HepG2 (cell line): ENCODE measurements at regions of chr3 and their contacts with region 1.

Region 1: DNA sequence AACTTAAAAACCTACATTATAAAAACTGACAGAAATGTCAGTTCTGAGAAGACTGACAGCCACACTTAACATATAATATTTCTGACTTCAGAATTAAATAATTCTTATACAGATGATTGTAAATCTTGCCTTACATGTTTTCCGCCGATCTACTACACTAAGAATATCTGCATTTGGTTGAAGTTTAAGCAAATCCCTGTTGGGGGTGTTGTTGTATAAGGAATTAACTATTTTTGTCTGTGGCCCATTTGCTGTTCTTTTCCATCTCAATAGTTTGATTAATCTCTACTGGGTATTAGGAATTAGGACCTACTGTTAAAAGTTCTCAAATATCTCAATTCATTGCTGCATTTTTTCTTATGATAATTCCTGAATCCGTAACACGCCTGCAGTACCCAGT is 838.3 kb upstream of the ROBO1 start:
- DNase-seq: no peak
- ATAC-seq: no peak
- H3K4me3 ChIP-seq: no peak overlapping the region
- H3K27ac ChIP-seq: no peak overlapping the region
- H3K4me1 ChIP-seq: no peaks in the 10 kb centered on the region
- H3K27me3 ChIP-seq: no peaks in the 10 kb centered on the region
- CTCF ChIP-seq: peak; percentile 49
- EP300 ChIP-seq: no peak
- POLR2A ChIP-seq: no peak
- RAD21 ChIP-seq: no peak

Region 2: DNA sequence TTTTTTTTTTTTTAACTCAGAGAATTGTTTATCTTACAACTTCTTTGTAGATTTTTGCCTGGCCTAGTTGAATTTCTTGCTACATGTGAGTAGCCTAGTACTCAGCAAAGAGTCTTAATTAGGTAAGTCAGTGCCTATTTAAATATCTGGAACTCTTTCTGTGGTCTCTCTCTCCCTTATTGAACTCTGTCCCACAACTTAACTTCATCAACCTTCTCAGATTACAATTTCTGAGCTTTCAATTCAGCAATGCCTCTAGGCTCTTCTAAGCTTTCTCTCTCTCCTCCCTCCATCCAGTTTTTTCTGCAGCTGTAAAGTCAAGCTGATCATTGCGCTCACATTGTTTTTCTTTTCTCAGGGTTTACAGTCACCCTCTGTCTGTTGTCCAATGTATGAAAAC is 320.7 kb before region 1 on chr3:
- CTCF ChIA-PET with region 1: no interaction called
- POLR2A ChIA-PET with region 1: no interaction called
- in situ Hi-C with region 1: no loop called
- intact Hi-C with region 1: no loop called
- DNase-seq: no peak
- ATAC-seq: no peak
- H3K4me3 ChIP-seq: no peak overlapping the region
- H3K27ac ChIP-seq: no peak overlapping the region
- H3K4me1 ChIP-seq: no peaks in the 10 kb centered on the region
- H3K27me3 ChIP-seq: no peaks in the 10 kb centered on the region
- CTCF ChIP-seq: no peak
- EP300 ChIP-seq: no peak
- POLR2A ChIP-seq: no peak
- RAD21 ChIP-seq: no peak

Region 3: GRCh38 chr3:80472451-80472850 is 133.6 kb before region 1 on chr3:
- CTCF ChIA-PET with region 1: no interaction called
- POLR2A ChIA-PET with region 1: no interaction called
- in situ Hi-C with region 1: no loop called
- intact Hi-C with region 1: no loop called
- DNase-seq: no peak
- ATAC-seq: no peak
- H3K4me3 ChIP-seq: no peak overlapping the region
- H3K27ac ChIP-seq: no peak overlapping the region
- H3K4me1 ChIP-seq: no peaks in the 10 kb centered on the region
- H3K27me3 ChIP-seq: no peaks in the 10 kb centered on the region
- CTCF ChIP-seq: no peak
- EP300 ChIP-seq: no peak
- POLR2A ChIP-seq: no peak
- RAD21 ChIP-seq: no peak

Region 4: DNA sequence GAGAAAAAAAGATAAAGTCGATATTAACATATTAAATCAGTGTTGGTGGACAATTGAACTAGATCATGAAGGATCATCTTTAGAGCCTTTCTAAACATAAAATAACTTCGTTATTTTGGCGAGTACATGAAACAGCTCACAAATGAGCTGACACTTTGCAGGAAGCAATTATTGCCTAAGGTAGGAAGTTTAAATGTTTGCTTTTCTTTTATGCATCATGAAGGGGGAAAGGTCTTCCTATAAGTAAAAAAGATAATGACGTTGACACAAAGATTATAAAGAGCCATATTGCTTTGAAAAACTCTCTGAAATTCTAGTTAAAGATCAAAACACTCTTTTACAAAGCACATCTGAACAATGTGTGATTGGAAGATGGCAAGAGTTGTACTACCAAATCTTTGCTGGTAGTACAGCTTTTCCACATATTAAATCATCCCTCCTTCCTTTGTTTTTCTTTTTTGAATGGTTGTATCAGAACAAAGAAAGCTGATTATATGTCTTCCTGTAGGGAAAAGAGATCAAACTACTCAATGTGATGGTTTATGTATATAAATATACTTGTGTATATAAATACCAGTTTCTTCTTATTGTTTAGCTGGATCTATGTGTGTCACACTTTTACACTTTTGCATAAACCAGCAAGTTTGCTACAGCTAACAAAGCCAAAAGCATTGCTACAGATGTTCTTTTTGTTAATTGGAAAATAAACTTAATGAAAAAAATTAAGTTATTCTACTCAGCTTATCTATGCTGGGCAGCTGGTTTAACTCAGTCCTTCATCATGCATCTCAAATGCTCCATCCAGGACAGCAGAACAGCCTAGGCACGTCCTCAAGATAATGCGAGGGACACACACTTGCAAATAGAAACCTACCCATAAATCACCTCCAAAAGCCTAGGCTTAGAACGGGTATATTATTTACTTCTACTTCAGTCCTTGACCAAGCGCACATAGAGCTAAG is 12.5 kb after region 1 on chr3:
- CTCF ChIA-PET with region 1: no interaction called
- POLR2A ChIA-PET with region 1: no interaction called
- in situ Hi-C with region 1: no loop called
- intact Hi-C with region 1: no loop called
- DNase-seq: peak; percentile 84
- ATAC-seq: peak; percentile 88
- H3K4me3 ChIP-seq: no peak overlapping the region
- H3K27ac ChIP-seq: peak overlapping the region; percentile 48
- H3K4me1 ChIP-seq: peaks cover 23% of the 10 kb centered on the region
- H3K27me3 ChIP-seq: no peaks in the 10 kb centered on the region
- CTCF ChIP-seq: no peak
- EP300 ChIP-seq: peak in 1 of 2 experiments; percentile 95; a peak in 2 of 4 replicates
- POLR2A ChIP-seq: no peak
- RAD21 ChIP-seq: no peak

Region 5: DNA sequence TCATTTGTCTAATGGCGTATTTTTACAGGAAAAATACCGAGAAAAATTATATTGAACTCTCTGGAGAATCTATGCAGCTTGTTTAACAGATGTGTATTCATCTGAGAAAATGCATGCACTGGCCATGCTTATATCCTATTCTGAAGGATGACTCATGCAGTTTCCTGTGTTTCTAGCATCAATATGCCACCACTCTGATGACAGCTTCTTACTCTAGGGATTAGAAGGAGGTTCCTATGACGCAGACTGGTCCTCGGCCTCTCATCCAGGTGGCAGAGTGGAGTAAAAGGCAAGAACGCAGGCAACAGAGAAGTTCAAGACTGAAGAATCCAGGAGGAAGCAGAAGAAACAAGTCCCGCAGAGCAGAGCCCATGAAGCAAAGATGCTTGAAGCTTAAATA is 71.7 kb after region 1 on chr3:
- CTCF ChIA-PET with region 1: no interaction called
- POLR2A ChIA-PET with region 1: no interaction called
- in situ Hi-C with region 1: no loop called
- intact Hi-C with region 1: loop called (anchors 2 kb)
- DNase-seq: no peak
- ATAC-seq: no peak
- H3K4me3 ChIP-seq: no peak overlapping the region
- H3K27ac ChIP-seq: no peak overlapping the region
- H3K4me1 ChIP-seq: no peaks in the 10 kb centered on the region
- H3K27me3 ChIP-seq: no peaks in the 10 kb centered on the region
- CTCF ChIP-seq: no peak
- EP300 ChIP-seq: no peak
- POLR2A ChIP-seq: no peak
- RAD21 ChIP-seq: no peak

Region 6: DNA sequence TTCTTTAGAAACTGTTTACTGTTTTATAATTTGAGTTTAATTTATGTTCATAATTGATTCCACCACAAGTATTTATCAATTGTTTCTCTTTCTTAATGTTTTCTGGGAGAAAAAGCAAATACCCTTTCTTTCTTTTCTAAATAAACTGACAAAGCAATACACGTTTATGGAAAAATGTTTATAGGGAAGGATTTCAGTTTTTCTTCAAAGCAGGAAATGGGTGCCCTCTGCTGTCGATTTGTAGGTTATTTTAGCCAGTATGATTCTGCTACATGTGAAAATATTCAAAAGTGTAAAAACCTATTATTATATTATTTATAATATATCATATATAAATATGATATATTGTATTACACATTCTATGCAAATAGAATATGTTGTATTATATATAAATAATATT is 82.7 kb after region 1 on chr3:
- CTCF ChIA-PET with region 1: interaction called, 8 read pairs
- POLR2A ChIA-PET with region 1: no interaction called
- in situ Hi-C with region 1: no loop called
- intact Hi-C with region 1: loop called (anchors 1 kb)
- DNase-seq: peak; percentile 19
- ATAC-seq: no peak
- H3K4me3 ChIP-seq: no peak overlapping the region
- H3K27ac ChIP-seq: no peak overlapping the region
- H3K4me1 ChIP-seq: no peaks in the 10 kb centered on the region
- H3K27me3 ChIP-seq: no peaks in the 10 kb centered on the region; a peak in 1 of 5 replicates
- CTCF ChIP-seq: peak; percentile 46
- EP300 ChIP-seq: no peak
- POLR2A ChIP-seq: no peak
- RAD21 ChIP-seq: no peak

Region 7: GRCh38 chr3:80785470-80785869 is 179.4 kb after region 1 on chr3:
- CTCF ChIA-PET with region 1: no interaction called
- POLR2A ChIA-PET with region 1: no interaction called
- in situ Hi-C with region 1: no loop called
- intact Hi-C with region 1: loop called (anchors 1 kb)
- DNase-seq: peak; percentile 6
- ATAC-seq: peak; percentile 47; the same call in 2 of the 3 replicates
- H3K4me3 ChIP-seq: no peak overlapping the region
- H3K27ac ChIP-seq: no peak overlapping the region
- H3K4me1 ChIP-seq: no peaks in the 10 kb centered on the region
- H3K27me3 ChIP-seq: no peaks in the 10 kb centered on the region
- CTCF ChIP-seq: peak; percentile 48
- EP300 ChIP-seq: no peak
- POLR2A ChIP-seq: no peak
- RAD21 ChIP-seq: no peak

Region 8: DNA sequence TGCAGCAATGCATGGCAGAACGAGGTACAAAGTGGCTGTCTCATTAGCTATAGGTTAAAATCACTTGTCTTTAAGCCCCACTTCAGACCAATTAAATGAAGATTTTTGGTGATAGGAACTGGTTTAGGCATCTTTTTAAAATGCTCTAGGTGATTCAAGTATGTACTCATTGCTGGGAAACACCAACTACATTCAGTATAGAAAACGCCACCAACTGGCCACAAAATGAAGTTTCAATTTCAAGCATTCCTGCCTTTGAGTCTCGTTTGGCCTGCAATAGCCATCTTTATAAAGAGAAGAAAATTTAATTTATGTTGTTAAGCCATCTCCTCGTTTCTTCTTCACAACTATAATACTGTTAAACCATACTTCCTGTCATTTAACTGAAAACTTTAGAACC is 567.4 kb after region 1 on chr3:
- CTCF ChIA-PET with region 1: no interaction called
- POLR2A ChIA-PET with region 1: no interaction called
- in situ Hi-C with region 1: no loop called
- intact Hi-C with region 1: loop called (anchors 1 kb)
- DNase-seq: peak; percentile 10
- ATAC-seq: peak; percentile 64; the same call in 2 of the 3 replicates
- H3K4me3 ChIP-seq: no peak overlapping the region
- H3K27ac ChIP-seq: no peak overlapping the region
- H3K4me1 ChIP-seq: no peaks in the 10 kb centered on the region
- H3K27me3 ChIP-seq: no peaks in the 10 kb centered on the region
- CTCF ChIP-seq: peak; percentile 36; the same call in 1 of the 2 replicates
- EP300 ChIP-seq: no peak
- POLR2A ChIP-seq: no peak
- RAD21 ChIP-seq: no peak

Region 9: DNA sequence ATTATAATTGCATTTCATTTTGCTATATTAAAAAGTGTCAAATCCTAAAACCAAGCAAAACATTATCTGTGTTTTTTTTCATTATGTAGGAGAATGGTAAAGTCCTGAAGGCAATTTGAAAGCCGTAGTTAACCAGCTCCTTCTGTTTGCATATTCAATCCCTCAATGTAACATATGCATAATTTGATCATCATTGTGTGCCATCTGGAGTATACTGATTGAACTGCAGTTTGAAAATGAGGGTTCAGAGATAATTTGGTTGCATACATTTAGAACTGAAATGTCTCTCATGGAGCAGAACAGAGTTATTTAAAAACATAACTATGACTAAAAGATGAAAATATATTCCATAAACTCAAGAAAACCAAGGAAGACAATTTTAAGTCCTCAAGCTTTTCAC is 636.8 kb after region 1 on chr3:
- CTCF ChIA-PET with region 1: no interaction called
- POLR2A ChIA-PET with region 1: no interaction called
- in situ Hi-C with region 1: no loop called
- intact Hi-C with region 1: loop called (anchors 5 kb)
- DNase-seq: peak; percentile 3
- ATAC-seq: 0 out of 3 replicates have a peak, but pooled peaks have one; percentile 41
- H3K4me3 ChIP-seq: no peak overlapping the region
- H3K27ac ChIP-seq: no peak overlapping the region
- H3K4me1 ChIP-seq: no peaks in the 10 kb centered on the region
- H3K27me3 ChIP-seq: no peaks in the 10 kb centered on the region
- CTCF ChIP-seq: peak; percentile 21; the same call in 1 of the 2 replicates
- EP300 ChIP-seq: no peak
- POLR2A ChIP-seq: no peak
- RAD21 ChIP-seq: no peak